GM23248 (cell line): ENCODE measurements at regions of chr6 and their contacts with region 1.

Region 1: GRCh38 chr6:89970609-89971337 is 76.5 kb downstream of the GJA10 start:
- DNase-seq: peak; percentile 87
- H3K4me3 ChIP-seq: no peak overlapping the region
- H3K27ac ChIP-seq: no peak overlapping the region
- H3K4me1 ChIP-seq: no peaks in the 10 kb centered on the region
- H3K27me3 ChIP-seq: peaks cover 10% of the 10 kb centered on the region; the same call in 1 of the 2 replicates

Region 2: GRCh38 chr6:89527634-89528033 is 443.1 kb before region 1 on chr6:
- in situ Hi-C with region 1: no loop called
- DNase-seq: peak; percentile 7
- H3K4me3 ChIP-seq: no peak overlapping the region
- H3K27ac ChIP-seq: no peak overlapping the region
- H3K4me1 ChIP-seq: no peaks in the 10 kb centered on the region
- H3K27me3 ChIP-seq: no peaks in the 10 kb centered on the region

Region 3: DNA sequence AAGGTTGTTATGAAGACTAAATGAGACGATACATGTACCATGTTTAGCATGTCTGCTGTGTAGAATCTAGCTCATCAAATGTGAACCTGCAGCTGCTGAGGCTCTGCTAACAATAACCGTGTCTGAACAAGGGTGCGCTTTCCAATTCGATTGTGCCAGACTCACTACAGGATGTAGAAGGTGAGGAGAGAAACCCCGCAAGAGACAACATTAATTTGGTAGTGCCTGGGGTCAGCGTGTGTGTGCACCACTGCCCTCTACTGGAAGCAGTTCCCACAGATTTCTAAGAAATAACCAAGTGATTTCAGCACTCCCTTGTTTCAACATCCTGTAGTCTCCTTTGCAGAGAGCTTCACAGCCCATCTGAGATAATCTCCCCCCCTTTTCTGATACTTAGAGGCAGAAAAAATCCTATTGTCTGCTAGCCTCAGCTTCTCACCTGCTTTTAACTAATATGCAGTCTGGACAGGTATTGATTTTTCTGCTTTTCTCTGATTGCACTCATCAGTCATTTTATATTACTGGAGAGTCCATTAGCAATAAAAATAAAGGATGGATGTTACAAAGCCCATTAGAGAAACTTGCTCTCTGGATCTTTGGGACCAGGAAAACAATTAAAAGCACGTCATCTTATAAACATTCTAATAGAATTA is 422.6 kb after region 1 on chr6:
- in situ Hi-C with region 1: loop called (anchors 10 kb)
- DNase-seq: peak; percentile 75
- H3K4me3 ChIP-seq: no peak overlapping the region
- H3K27ac ChIP-seq: no peak overlapping the region
- H3K4me1 ChIP-seq: no peaks in the 10 kb centered on the region
- H3K27me3 ChIP-seq: peaks cover 53% of the 10 kb centered on the region